Endothelial cell of umbilical vein (primary cell): ENCODE measurements at regions of chr10 and their contacts with region 1.

Region 1: GRCh38 chr10:126993235-126993634 is 88.0 kb downstream of the DOCK1 start:
- DNase-seq: no peak
- H3K4me3 ChIP-seq: no peak overlapping the region
- H3K27ac ChIP-seq: no peak overlapping the region
- H3K4me1 ChIP-seq: no peaks in the 10 kb centered on the region
- H3K27me3 ChIP-seq: no peaks in the 10 kb centered on the region
- CTCF ChIP-seq: no peak
- POLR2A ChIP-seq: no peak

Region 2: GRCh38 chr10:126904819-126905686 is 88.2 kb before region 1 on chr10 and contains the start of gene DOCK1:
- CTCF ChIA-PET with region 1: no interaction called
- POLR2A ChIA-PET with region 1: no interaction called
- dilution Hi-C with region 1: no loop called
- intact Hi-C with region 1: no loop called
- DNase-seq: peak; percentile 69
- H3K4me3 ChIP-seq: peak within 1 kb of the TSS; percentile 71 to 83 (median 78)
- H3K27ac ChIP-seq: peak within 1 kb of the TSS; percentile 74
- H3K4me1 ChIP-seq: peaks cover 8% of the 10 kb centered on the region
- H3K27me3 ChIP-seq: no peaks in the 10 kb centered on the region
- CTCF ChIP-seq: no peak
- POLR2A ChIP-seq: peak; percentile 24
- total RNA-seq, gene DOCK1: 78.7 and 83.1 TPM in 2 replicates

Region 3: DNA sequence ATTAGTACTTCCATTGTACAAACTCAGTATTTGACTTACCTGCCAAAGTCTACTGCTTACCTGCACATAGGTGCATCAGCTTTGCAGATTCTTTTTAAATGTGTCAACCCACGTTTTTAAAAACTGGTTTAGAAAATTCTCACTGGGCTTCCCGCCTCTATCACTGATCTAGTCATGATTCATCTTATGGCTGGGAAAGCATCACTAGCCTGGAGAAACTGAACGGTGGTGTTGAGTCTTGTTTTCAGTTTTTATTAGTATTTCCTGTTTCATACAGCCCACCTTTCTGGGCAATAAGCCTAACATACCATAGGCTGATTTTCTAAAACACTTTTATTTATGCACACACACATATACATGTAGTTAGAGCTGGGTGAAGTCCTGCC is 68.3 kb before region 1 on chr10:
- CTCF ChIA-PET with region 1: no interaction called
- POLR2A ChIA-PET with region 1: no interaction called
- dilution Hi-C with region 1: no loop called
- intact Hi-C with region 1: loop called (anchors 5 kb)
- DNase-seq: no peak
- H3K4me3 ChIP-seq: no peak overlapping the region
- H3K27ac ChIP-seq: no peak overlapping the region
- H3K4me1 ChIP-seq: no peaks in the 10 kb centered on the region
- H3K27me3 ChIP-seq: no peaks in the 10 kb centered on the region
- CTCF ChIP-seq: no peak
- POLR2A ChIP-seq: no peak

Region 4: DNA sequence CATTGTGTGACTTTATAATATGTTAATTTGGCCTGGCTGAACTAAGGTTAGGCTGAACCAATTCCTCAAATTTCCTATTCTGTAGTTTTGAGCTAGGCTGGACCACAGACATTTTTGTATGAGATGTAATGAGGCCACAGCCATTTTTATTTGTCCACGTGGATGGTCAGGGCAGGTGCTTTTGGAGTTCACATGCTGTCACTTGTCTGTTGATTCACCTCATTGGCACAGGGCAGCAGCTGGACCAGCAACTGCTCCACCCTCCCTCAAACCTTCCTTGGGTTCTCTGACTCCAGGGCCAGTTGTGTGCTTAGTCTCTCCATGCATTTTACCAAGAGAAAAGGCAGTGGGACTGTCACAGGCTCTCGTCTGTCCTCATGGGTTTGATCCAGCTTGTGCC is 479.7 kb after region 1 on chr10:
- CTCF ChIA-PET with region 1: no interaction called
- POLR2A ChIA-PET with region 1: no interaction called
- dilution Hi-C with region 1: no loop called
- intact Hi-C with region 1: no loop called
- DNase-seq: no peak
- H3K4me3 ChIP-seq: no peak overlapping the region
- H3K27ac ChIP-seq: no peak overlapping the region
- H3K4me1 ChIP-seq: no peaks in the 10 kb centered on the region
- H3K27me3 ChIP-seq: no peaks in the 10 kb centered on the region
- CTCF ChIP-seq: no peak
- POLR2A ChIP-seq: no peak